Sigmoid colon (tissue), 7 donors: ENCODE measurements at regions of chr20 and their contacts with region 1.

Region 1: DNA sequence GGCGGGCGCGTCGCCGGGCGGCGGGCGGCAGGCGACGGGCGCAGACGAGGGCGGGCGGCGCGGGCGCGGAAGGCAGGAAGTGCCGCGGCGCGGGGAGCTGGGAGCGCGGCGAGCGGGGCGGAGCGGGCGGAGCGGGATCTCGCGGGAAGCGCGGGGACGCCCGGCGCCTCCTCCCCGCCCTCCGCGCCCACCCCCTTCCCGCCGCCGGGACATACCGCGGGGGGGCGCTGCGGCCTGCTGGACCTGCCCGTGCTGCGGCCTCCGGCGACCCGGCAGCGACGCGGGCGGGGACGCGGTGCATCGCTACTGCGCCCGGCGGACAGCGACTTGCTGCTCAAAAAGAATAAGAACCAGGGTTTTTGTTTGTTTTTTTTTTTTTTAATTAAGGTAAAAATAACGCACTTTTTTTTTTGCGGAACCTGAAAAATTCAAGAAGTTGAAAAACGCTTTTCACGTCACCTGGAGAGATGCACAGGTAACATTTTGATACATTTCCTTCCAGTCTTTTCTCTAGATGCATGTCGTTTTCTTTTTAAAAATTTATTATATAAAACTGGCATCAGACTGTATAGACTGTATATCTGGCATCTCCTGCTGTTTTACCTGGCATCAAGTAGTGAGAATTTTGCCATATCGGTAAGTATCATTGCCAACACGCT is at the start of gene CENPB:
- DNase-seq: peak; percentile 94
- H3K4me3 ChIP-seq: peak within 1 kb of the TSS; percentile 65 to 73 (median 68)
- H3K27ac ChIP-seq: peak within 1 kb of the TSS; percentile 84 to 92 (median 86)
- H3K4me1 ChIP-seq: peaks cover 0 to 41% (median 34%) of the 10 kb centered on the region in 4 donors
- H3K27me3 ChIP-seq: no peaks in the 10 kb centered on the region
- CTCF ChIP-seq: peak; percentile 17 to 79 (median 39)
- EP300 ChIP-seq: no peak
- POLR2A ChIP-seq: no peak
- total RNA-seq, gene CENPB: 73.4 to 99.9 (median 84.3) TPM

Region 2: GRCh38 chr20:3820048-3820900 is 33.5 kb after region 1 on chr20 and contains the start of gene AP5S1:
- intact Hi-C with region 1: loop called (anchors 1 kb)
- DNase-seq: peak; percentile 99
- H3K4me3 ChIP-seq: peak within 1 kb of the TSS; percentile 63 to 83 (median 77)
- H3K27ac ChIP-seq: peak within 1 kb of the TSS; percentile 95 to 98 (median 97)
- H3K4me1 ChIP-seq: peaks cover 0 to 29% (median 25%) of the 10 kb centered on the region in 4 donors
- H3K27me3 ChIP-seq: no peaks in the 10 kb centered on the region
- CTCF ChIP-seq: peak; percentile 99 to 100 (median 99)
- EP300 ChIP-seq: peak in 1 of 4 donors; percentile 75
- POLR2A ChIP-seq: peak; percentile 71
- total RNA-seq, gene AP5S1: 5.4 to 11.8 (median 7.3) TPM

Region 3: GRCh38 chr20:3854462-3854871 is 67.7 kb after region 1 on chr20:
- intact Hi-C with region 1: loop called (anchors 2 kb)
- DNase-seq: no peak
- H3K4me3 ChIP-seq: no peak overlapping the region
- H3K27ac ChIP-seq: no peak overlapping the region
- H3K4me1 ChIP-seq: peaks cover 0 to 7% (median 1%) of the 10 kb centered on the region in 4 donors
- H3K27me3 ChIP-seq: no peaks in the 10 kb centered on the region
- CTCF ChIP-seq: no peak
- EP300 ChIP-seq: no peak
- POLR2A ChIP-seq: no peak

Region 4: DNA sequence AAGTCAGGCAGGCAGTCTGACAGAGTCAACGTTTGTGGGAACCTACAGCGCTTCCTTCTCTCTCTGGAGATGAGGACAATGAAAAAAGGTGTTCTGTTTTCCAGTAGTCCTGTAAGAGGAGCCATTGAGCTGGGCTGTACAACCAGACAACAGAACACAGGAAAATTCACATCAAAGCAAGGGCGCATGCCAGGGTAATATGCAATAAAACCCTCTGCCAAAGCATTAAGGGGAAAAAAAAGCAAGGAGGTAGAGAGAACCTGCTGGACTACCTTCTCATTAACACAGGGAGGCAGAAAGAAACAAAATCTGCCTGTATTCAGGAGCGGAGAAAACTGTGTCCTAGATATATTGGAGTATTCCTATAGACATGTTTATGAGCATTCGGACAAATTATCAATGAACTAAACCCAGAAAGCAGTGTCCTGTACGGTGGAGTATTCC is 227.3 kb after region 1 on chr20:
- intact Hi-C with region 1: loop called (anchors 10 kb)
- DNase-seq: no peak
- H3K4me3 ChIP-seq: peak overlapping the region in 2 of 4 donors; percentile 68 to 90
- H3K27ac ChIP-seq: peak overlapping the region; percentile 8 to 86 (median 82)
- H3K4me1 ChIP-seq: peaks cover 0 to 21% (median 18%) of the 10 kb centered on the region in 4 donors
- H3K27me3 ChIP-seq: no peaks in the 10 kb centered on the region
- CTCF ChIP-seq: peak in 3 of 4 experiments; percentile 30 to 52 (median 36)
- EP300 ChIP-seq: no peak
- POLR2A ChIP-seq: no peak